ENCODE measurements at regions of chr9 and their contacts with region 1.

Region 1: DNA sequence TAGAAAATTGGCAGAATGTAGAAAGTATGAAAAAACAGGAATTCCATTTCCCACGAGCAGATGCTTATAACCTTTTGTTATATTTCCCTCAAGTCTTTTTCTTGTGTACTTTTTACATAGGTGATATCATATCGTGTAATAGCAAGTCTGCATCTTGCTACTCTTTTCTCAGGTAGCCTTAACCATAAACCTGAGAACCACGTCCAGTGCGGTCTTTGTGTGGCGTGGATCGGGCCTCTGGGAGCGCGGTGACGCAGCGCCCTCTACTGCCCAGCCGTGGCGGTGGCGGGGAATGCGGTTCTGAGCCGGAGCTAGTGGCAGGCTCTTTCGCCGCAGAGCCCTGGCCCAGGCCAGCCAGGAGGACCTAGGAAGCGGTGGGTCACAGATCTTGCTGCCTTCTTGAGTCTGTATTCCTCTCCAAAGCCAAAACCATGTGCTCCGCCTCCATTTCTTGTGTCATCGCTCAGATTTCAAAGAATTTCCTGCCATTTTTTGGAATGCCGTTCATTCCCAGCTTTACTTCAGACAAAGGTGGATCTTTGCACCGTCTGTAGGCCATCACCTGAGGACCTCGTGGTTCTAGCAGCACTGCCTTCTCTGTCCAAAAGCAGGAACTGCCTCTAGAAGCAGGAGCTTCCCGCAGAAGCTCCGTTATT is 71.9 kb downstream of the MVB12B start:
- DNase-seq: no peak
- H3K4me3 ChIP-seq: no peak overlapping the region
- H3K27me3 ChIP-seq: no peaks in the 10 kb centered on the region
- CTCF ChIP-seq: peak; percentile 99

Region 2: GRCh38 chr9:126307322-126308061 is 91.0 kb before region 1 on chr9:
- CTCF ChIA-PET with region 1: interaction called, 109 read pairs
- POLR2A ChIA-PET with region 1: no interaction called
- DNase-seq: no peak
- H3K4me3 ChIP-seq: no peak overlapping the region
- H3K27me3 ChIP-seq: peaks cover 3% of the 10 kb centered on the region
- CTCF ChIP-seq: no peak

Region 3: GRCh38 chr9:126379661-126380360 is 18.7 kb before region 1 on chr9:
- CTCF ChIA-PET with region 1: interaction called, 33 read pairs
- POLR2A ChIA-PET with region 1: no interaction called
- DNase-seq: no peak
- H3K4me3 ChIP-seq: no peak overlapping the region
- H3K27me3 ChIP-seq: no peaks in the 10 kb centered on the region
- CTCF ChIP-seq: no peak

Region 4: GRCh38 chr9:126417043-126417442 is 18.5 kb after region 1 on chr9:
- CTCF ChIA-PET with region 1: interaction called, 11 read pairs
- POLR2A ChIA-PET with region 1: no interaction called
- DNase-seq: no peak
- H3K4me3 ChIP-seq: no peak overlapping the region
- H3K27me3 ChIP-seq: no peaks in the 10 kb centered on the region
- CTCF ChIP-seq: no peak

Region 5: DNA sequence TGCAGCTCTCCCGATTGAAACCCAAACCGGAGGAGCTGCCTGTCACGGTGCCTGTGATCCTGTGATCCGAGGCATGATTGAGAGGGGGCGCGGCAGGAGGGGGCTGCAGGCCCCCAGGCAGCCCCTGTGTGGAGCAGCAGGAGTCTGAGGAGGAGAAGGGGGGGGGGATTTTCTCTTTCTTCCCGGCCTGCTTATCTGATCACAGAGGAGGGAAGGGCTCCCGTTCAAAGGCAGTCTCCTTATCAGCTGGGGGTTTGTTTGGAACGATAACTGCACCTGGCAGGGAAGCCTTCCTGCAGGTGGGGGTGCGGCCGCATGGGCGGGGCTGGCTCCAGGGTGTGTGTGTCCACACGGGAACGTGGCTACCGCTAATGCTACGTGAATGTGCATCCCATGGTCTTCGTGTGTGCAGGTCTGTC is 253.6 kb after region 1 on chr9:
- CTCF ChIA-PET with region 1: no interaction called
- POLR2A ChIA-PET with region 1: no interaction called
- DNase-seq: no peak
- H3K4me3 ChIP-seq: no peak overlapping the region
- H3K27me3 ChIP-seq: peaks cover 15% of the 10 kb centered on the region
- CTCF ChIP-seq: no peak

Region 6: GRCh38 chr9:127785023-127785932 is 1386.7 kb after region 1 on chr9:
- CTCF ChIA-PET with region 1: no interaction called
- POLR2A ChIA-PET with region 1: no interaction called
- DNase-seq: no peak
- H3K4me3 ChIP-seq: peak overlapping the region; percentile 95
- H3K27me3 ChIP-seq: 0 out of 2 replicates have a peak, but pooled peaks cover under 1% of the 10 kb centered on the region
- CTCF ChIP-seq: peak; percentile 91